ENCODE measurements at regions of chr15 and their contacts with region 1.

Region 1: GRCh38 chr15:100349696-100350433 is 8.1 kb upstream of the ADAMTS17 start:
- DNase-seq: peak; percentile 92
- ATAC-seq: peak; percentile 93
- H3K4me3 Mint-ChIP-seq: peak overlapping the region; percentile 87
- H3K27ac Mint-ChIP-seq: no peak overlapping the region
- H3K4me1 Mint-ChIP-seq: peaks cover 11% of the 10 kb centered on the region
- H3K27me3 Mint-ChIP-seq: peaks cover 43% of the 10 kb centered on the region
- CTCF ChIP-seq: peak; percentile 70

Region 2: GRCh38 chr15:99928429-99928981 is 421.4 kb before region 1 on chr15:
- CTCF ChIA-PET with region 1: interaction called, 21 read pairs
- POLR2A ChIA-PET with region 1: no interaction called
- DNase-seq: peak; percentile 55
- ATAC-seq: peak; percentile 13
- H3K4me3 Mint-ChIP-seq: peak overlapping the region; percentile 81
- H3K27ac Mint-ChIP-seq: no peak overlapping the region
- H3K4me1 Mint-ChIP-seq: peaks cover 31% of the 10 kb centered on the region
- H3K27me3 Mint-ChIP-seq: peaks cover 39% of the 10 kb centered on the region
- CTCF ChIP-seq: peak; percentile 49

Region 3: DNA sequence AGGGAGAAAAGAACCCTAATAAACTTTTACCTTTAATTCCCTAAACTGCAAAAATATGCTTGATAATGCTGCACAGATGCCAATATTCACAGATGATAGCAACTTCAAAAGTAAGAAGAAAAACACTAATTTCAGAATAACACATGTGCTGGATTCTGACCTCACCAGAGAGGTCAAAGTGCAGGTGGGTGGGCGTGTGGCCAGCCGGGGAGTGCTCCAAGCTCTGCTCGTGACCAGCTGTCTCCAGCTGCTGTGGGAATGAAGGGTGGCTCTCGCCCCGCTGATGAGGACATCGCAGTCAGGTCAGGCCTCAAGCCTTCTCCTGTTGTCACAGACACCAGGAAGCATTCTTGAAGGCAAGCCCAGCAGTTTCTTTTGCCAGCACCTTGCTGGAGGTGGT is 65.2 kb before region 1 on chr15:
- CTCF ChIA-PET with region 1: no interaction called
- POLR2A ChIA-PET with region 1: no interaction called
- DNase-seq: no peak
- ATAC-seq: no peak
- H3K4me3 Mint-ChIP-seq: no peak overlapping the region
- H3K27ac Mint-ChIP-seq: no peak overlapping the region
- H3K4me1 Mint-ChIP-seq: no peaks in the 10 kb centered on the region
- H3K27me3 Mint-ChIP-seq: no peaks in the 10 kb centered on the region
- CTCF ChIP-seq: no peak

Region 4: GRCh38 chr15:100328796-100329195 is 21.1 kb before region 1 on chr15:
- CTCF ChIA-PET with region 1: no interaction called
- POLR2A ChIA-PET with region 1: no interaction called
- DNase-seq: no peak
- ATAC-seq: no peak
- H3K4me3 Mint-ChIP-seq: no peak overlapping the region
- H3K27ac Mint-ChIP-seq: no peak overlapping the region
- H3K4me1 Mint-ChIP-seq: no peaks in the 10 kb centered on the region
- H3K27me3 Mint-ChIP-seq: no peaks in the 10 kb centered on the region
- CTCF ChIP-seq: no peak

Region 5: GRCh38 chr15:100373120-100373896 is 23.4 kb after region 1 on chr15:
- CTCF ChIA-PET with region 1: interaction called, 27 read pairs
- POLR2A ChIA-PET with region 1: no interaction called
- DNase-seq: peak; percentile 21
- ATAC-seq: peak; percentile 70
- H3K4me3 Mint-ChIP-seq: peak overlapping the region; percentile 82
- H3K27ac Mint-ChIP-seq: no peak overlapping the region
- H3K4me1 Mint-ChIP-seq: peaks cover 5% of the 10 kb centered on the region
- H3K27me3 Mint-ChIP-seq: peaks cover 52% of the 10 kb centered on the region
- CTCF ChIP-seq: no peak

Region 6: DNA sequence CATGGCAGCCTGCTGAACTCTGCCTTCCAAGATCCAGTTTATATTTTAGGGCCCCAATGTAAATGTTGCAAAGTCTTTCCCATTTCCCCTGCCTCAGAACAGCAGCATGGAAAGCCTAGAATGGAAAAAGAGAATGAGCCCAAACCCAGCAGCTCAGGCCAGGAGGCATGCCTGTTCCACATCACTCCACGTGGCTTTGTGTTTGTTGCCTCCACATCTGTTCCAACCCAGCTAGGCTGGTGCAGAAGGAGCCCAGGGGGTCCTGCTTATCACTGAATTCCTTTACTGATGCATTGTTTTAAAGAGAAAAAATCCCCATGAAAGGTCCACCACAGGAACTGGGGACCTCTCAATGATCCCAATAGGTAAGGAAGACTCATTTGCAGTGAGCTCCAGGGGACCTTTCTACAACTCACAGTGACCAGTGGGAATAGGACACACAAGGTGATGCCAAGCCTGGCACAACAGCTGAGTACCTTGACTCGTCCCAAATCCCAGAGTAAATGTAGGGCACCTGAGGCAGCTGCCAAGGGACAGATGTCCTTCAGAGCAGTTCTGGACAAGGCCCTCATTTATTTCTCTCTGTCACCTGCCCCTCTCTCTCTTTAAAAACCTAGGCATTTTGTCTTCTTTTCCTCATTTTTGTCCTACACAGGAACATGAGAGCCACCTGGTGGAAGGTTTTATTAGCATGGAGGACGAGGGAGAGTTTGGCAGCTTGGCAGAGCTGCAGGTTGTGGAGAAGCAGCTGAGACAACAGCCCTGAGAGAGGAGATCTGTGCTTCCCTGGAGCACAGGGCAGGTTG is 33.6 kb after region 1 on chr15:
- CTCF ChIA-PET with region 1: interaction called, 50 read pairs
- POLR2A ChIA-PET with region 1: no interaction called
- DNase-seq: peak; percentile 40
- ATAC-seq: peak; percentile 77
- H3K4me3 Mint-ChIP-seq: no peak overlapping the region
- H3K27ac Mint-ChIP-seq: no peak overlapping the region
- H3K4me1 Mint-ChIP-seq: no peaks in the 10 kb centered on the region
- H3K27me3 Mint-ChIP-seq: peaks cover 7% of the 10 kb centered on the region
- CTCF ChIP-seq: 0 out of 2 replicates have a peak, but pooled peaks have one; percentile 33

Region 7: DNA sequence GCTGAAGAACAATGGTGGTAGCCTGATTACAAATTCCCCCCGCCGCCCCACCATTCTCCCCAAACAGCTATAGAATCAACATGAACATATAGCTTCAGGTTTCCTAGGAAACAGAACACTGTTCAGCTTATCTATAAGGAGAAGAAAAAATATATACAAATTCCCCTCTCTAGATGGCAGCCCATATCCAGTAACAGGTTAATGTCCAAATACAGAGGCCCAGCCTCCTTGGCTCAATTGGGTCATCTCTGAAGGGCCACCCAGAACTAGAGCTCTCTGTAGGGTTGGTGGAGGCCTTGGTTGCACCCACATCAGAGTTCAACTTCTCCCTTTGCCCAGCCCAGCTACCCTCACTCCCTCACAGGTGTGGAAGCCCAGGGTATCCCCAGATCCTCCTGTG is 83.4 kb after region 1 on chr15:
- CTCF ChIA-PET with region 1: interaction called, 12 read pairs
- POLR2A ChIA-PET with region 1: no interaction called
- DNase-seq: no peak
- ATAC-seq: no peak
- H3K4me3 Mint-ChIP-seq: no peak overlapping the region
- H3K27ac Mint-ChIP-seq: no peak overlapping the region
- H3K4me1 Mint-ChIP-seq: peaks cover 6% of the 10 kb centered on the region
- H3K27me3 Mint-ChIP-seq: no peaks in the 10 kb centered on the region; the same call in 1 of the 2 replicates
- CTCF ChIP-seq: no peak

Region 8: DNA sequence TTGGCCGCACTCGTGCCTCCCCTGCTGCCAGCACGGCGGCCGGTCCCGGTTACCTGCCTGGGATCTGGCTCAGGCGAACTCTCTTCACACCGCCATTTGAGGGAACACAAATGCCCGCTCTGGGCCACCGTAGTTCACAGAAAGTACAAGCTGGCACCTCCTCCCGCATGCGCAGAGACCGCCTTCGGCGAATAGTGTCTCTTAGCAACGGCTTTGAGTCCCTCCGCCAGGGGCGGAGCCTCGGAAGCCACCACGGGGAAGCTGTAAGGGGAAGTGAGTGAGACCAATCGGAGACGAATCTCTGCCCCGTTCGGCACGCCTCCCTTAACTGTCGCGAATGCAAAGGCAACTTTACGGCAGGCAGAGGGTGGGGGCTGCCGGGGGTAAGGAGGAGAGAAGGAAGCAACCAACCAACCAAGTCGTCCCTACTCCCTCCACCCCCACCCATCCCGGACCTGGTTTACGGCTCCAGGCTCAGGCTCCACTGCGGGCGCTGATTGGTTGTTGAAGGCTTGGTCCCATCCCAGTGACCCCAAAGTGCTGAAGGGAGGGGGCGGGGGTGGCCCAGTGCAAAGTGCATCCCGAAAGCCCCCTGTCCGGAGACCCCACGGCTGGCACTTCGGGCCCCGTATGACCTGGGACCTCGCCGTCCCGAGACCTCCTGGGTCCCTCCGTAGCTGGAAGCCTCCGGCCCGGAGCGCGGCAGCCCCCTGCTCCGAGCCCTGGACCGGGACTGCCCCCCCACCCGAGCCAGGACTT is 252.4 kb after region 1 on chr15 and contains the starts of genes ASB7 and LINS1:
- CTCF ChIA-PET with region 1: interaction called, 37 read pairs
- POLR2A ChIA-PET with region 1: interaction called, 4 read pairs
- DNase-seq: peak; percentile 99
- ATAC-seq: peak; percentile 93
- H3K4me3 Mint-ChIP-seq: no peak within 1 kb of the TSS
- H3K27ac Mint-ChIP-seq: peak within 1 kb of the TSS; percentile 90
- H3K4me1 Mint-ChIP-seq: peaks cover 8% of the 10 kb centered on the region
- H3K27me3 Mint-ChIP-seq: no peaks in the 10 kb centered on the region
- CTCF ChIP-seq: no peak
- total RNA-seq, gene ASB7: 11.5 to 13.4 TPM (median 12.9 TPM) in 3 replicates
- total RNA-seq, gene LINS1: 6.2 to 10.4 TPM (median 9.1 TPM) in 3 replicates

Region 9: GRCh38 chr15:100627789-100628395 is 278.0 kb after region 1 on chr15:
- CTCF ChIA-PET with region 1: interaction called, 13 read pairs
- POLR2A ChIA-PET with region 1: no interaction called
- DNase-seq: peak; percentile 66
- ATAC-seq: peak; percentile 87
- H3K4me3 Mint-ChIP-seq: no peak overlapping the region
- H3K27ac Mint-ChIP-seq: no peak overlapping the region
- H3K4me1 Mint-ChIP-seq: peaks cover 7% of the 10 kb centered on the region
- H3K27me3 Mint-ChIP-seq: no peaks in the 10 kb centered on the region
- CTCF ChIP-seq: peak; percentile 82